HepG2 (cell line): ENCODE measurements at regions of chr4 and their contacts with region 1.

Region 1: GRCh38 chr4:154928640-154929257 is 147.7 kb downstream of the RBM46 start:
- DNase-seq: peak; percentile 32
- ATAC-seq: peak; percentile 48; the same call in 1 of the 3 replicates
- H3K4me3 ChIP-seq: no peak overlapping the region
- H3K27ac ChIP-seq: no peak overlapping the region
- H3K4me1 ChIP-seq: no peaks in the 10 kb centered on the region
- H3K27me3 ChIP-seq: no peaks in the 10 kb centered on the region; a peak in 1 of 5 replicates
- CTCF ChIP-seq: peak; percentile 52
- EP300 ChIP-seq: no peak
- POLR2A ChIP-seq: no peak
- RAD21 ChIP-seq: no peak

Region 2: GRCh38 chr4:154626793-154627484 is 301.8 kb before region 1 on chr4:
- CTCF ChIA-PET with region 1: no interaction called
- POLR2A ChIA-PET with region 1: no interaction called
- in situ Hi-C with region 1: loop called (anchors 25 kb)
- intact Hi-C with region 1: no loop called
- DNase-seq: peak; percentile 49
- ATAC-seq: peak; percentile 99
- H3K4me3 ChIP-seq: peak overlapping the region in 1 of 3 experiments; percentile 34; a peak in 1 of 6 replicates
- H3K27ac ChIP-seq: no peak overlapping the region
- H3K4me1 ChIP-seq: peaks cover 18% of the 10 kb centered on the region
- H3K27me3 ChIP-seq: peaks cover 0 to 33% of the 10 kb centered on the region in 2 experiments; a peak in 4 of 5 replicates
- CTCF ChIP-seq: peak; percentile 81
- EP300 ChIP-seq: no peak
- POLR2A ChIP-seq: no peak
- RAD21 ChIP-seq: peak; percentile 70

Region 3: GRCh38 chr4:154642373-154643009 is 286.3 kb before region 1 on chr4:
- CTCF ChIA-PET with region 1: interaction called, 6 read pairs
- POLR2A ChIA-PET with region 1: no interaction called
- in situ Hi-C with region 1: loop called (anchors 25 kb)
- intact Hi-C with region 1: loop called (anchors 1 kb)
- DNase-seq: no peak
- ATAC-seq: peak; percentile 63; the same call in 2 of the 3 replicates
- H3K4me3 ChIP-seq: no peak overlapping the region
- H3K27ac ChIP-seq: no peak overlapping the region
- H3K4me1 ChIP-seq: no peaks in the 10 kb centered on the region
- H3K27me3 ChIP-seq: no peaks in the 10 kb centered on the region; a peak in 2 of 5 replicates
- CTCF ChIP-seq: peak; percentile 51
- EP300 ChIP-seq: no peak
- POLR2A ChIP-seq: no peak
- RAD21 ChIP-seq: no peak

Region 4: DNA sequence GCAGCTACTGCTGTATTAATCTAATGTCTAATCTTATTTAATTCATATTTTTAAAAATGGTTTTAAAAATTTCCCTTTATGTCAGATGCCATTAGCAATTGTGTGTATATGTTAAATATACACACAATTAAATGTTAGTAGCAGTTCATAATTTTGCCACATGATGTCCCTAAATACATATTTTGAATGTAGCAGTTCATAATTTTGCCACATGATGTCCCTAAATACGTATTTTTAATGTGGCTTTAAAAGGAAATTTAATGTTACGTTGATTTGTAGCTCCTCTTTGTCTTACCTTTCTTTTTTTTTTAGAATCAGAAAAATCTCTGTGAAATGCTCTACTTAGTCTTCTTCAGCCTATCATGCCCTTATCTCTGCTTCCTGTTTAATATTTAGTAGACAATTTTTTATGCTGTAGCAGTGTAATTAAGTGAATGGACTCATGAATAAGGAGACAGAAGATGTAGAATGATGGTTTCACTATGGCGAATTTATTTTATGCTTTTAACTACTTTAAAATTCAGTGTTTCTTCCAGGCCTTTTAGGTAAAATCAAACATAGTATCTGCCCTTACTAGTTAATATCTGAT is 121.6 kb before region 1 on chr4:
- CTCF ChIA-PET with region 1: interaction called, 6 read pairs
- POLR2A ChIA-PET with region 1: no interaction called
- in situ Hi-C with region 1: no loop called
- intact Hi-C with region 1: loop called (anchors 2 kb)
- DNase-seq: peak; percentile 4
- ATAC-seq: no peak
- H3K4me3 ChIP-seq: no peak overlapping the region
- H3K27ac ChIP-seq: no peak overlapping the region
- H3K4me1 ChIP-seq: no peaks in the 10 kb centered on the region
- H3K27me3 ChIP-seq: no peaks in the 10 kb centered on the region
- CTCF ChIP-seq: peak; percentile 45
- EP300 ChIP-seq: no peak
- POLR2A ChIP-seq: no peak
- RAD21 ChIP-seq: no peak